Activated T-helper 2 cell treated with anti-CD3 and anti-CD28 coated beads, Interferon-gamma antibody, Interleukin-2, Interleukin-4, amounts not matched to agents 10 μg/mL and 5 μg/mL and 100 μg/mL, durations not matched to agents 14 hours and 24 hours and 36 hours (primary cell): ENCODE measurements at regions of chr2 and their contacts with region 1.

Region 1: DNA sequence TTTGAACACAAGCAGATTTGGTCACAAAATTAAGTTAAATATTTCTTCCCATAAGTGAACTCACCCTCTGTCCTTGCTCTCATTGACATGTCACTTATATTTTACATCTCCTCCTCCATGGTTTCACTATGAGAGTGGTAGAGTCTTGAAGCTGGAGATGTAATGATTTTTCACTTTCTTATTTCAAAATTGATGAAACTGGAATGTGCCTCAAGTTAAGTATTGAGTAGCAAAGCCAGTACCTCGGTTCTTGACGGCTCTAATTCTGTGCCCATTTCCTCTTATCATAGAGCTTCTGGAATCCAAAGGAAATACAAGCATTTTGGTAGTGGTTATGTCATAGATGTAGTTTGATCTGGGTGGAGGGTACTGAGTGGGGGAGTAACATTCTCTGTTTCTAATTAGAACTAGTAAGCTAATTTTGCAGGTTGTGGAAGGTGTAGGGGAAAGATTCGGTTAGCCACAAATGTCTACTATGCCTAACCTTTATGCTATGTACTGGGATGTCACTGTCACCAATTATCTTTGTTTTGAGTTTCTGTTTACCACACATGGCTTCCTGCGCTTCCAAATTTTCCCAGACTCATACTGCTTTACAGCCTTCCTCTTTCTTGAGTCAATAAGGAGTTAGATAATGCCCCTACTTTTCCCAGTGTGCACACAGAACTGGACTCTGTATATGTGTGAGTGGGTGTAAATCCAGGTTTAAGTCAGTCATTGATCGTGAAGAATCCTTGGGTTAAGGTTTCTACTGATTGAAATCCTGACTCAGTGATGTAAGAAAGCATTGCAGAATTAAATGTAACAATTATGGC is 96.8 kb downstream of the DIS3L2 start:
- DNase-seq: no peak
- H3K4me3 Mint-ChIP-seq: no peak overlapping the region
- H3K27ac Mint-ChIP-seq: no peak overlapping the region
- H3K4me1 Mint-ChIP-seq: peaks cover 10% of the 10 kb centered on the region
- H3K27me3 Mint-ChIP-seq: peaks cover 45% of the 10 kb centered on the region

Region 2: GRCh38 chr2:231489990-231490389 is 568.3 kb before region 1 on chr2:
- intact Hi-C with region 1: no loop called
- DNase-seq: no peak
- H3K4me3 Mint-ChIP-seq: no peak overlapping the region
- H3K27ac Mint-ChIP-seq: no peak overlapping the region
- H3K4me1 Mint-ChIP-seq: peaks cover 11% of the 10 kb centered on the region
- H3K27me3 Mint-ChIP-seq: peaks cover 4% of the 10 kb centered on the region

Region 3: GRCh38 chr2:232026910-232027309 is 31.4 kb before region 1 on chr2:
- intact Hi-C with region 1: loop called (anchors 1 kb)
- DNase-seq: no peak
- H3K4me3 Mint-ChIP-seq: no peak overlapping the region
- H3K27ac Mint-ChIP-seq: no peak overlapping the region
- H3K4me1 Mint-ChIP-seq: peaks cover 27% of the 10 kb centered on the region
- H3K27me3 Mint-ChIP-seq: peaks cover 40% of the 10 kb centered on the region

Region 4: GRCh38 chr2:232113821-232114220 is 55.6 kb after region 1 on chr2:
- intact Hi-C with region 1: loop called (anchors 2 kb)
- DNase-seq: peak; percentile 16
- H3K4me3 Mint-ChIP-seq: no peak overlapping the region
- H3K27ac Mint-ChIP-seq: no peak overlapping the region
- H3K4me1 Mint-ChIP-seq: peaks cover 10% of the 10 kb centered on the region
- H3K27me3 Mint-ChIP-seq: peaks cover 52% of the 10 kb centered on the region